ENCODE measurements at regions of chr7 and their contacts with region 1.

Region 1: DNA sequence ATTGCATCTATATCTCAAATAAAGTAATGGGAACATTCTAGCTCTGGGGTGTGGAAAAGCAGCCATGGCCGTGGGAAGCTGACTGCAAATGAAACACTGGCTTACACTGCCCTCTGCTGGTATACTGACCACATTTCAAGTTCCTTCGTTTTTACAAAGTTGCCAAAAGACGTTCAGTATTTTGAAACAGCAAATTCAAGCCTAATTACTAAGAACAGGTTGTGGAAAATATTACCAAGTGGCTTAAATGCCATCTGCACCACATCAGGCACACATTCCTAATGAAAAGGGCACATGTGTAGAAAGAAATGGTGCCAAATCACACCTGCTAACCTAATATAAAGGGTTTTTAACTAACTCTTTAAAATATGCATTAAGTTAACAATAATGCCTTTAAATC is 83.9 kb downstream of the JAZF1 start:
- DNase-seq: peak; percentile 71
- H3K4me3 ChIP-seq: no peak overlapping the region
- H3K27ac ChIP-seq: no peak overlapping the region
- H3K4me1 ChIP-seq: no peaks in the 10 kb centered on the region
- H3K27me3 ChIP-seq: no peaks in the 10 kb centered on the region
- CTCF ChIP-seq: peak; percentile 71 to 77
- POLR2A ChIP-seq: no peak

Region 2: GRCh38 chr7:27179503-27180430 is 916.9 kb before region 1 on chr7:
- CTCF ChIA-PET with region 1: interaction called, 13 read pairs
- POLR2A ChIA-PET with region 1: no interaction called
- dilution Hi-C with region 1: no loop called
- intact Hi-C with region 1: no loop called
- DNase-seq: peak; percentile 90
- H3K4me3 ChIP-seq: peak overlapping the region; percentile 53 to 94 (median 69)
- H3K27ac ChIP-seq: peak overlapping the region; percentile 96
- H3K4me1 ChIP-seq: peaks cover 65% of the 10 kb centered on the region
- H3K27me3 ChIP-seq: no peaks in the 10 kb centered on the region
- CTCF ChIP-seq: peak; percentile 93 to 97
- POLR2A ChIP-seq: no peak

Region 3: DNA sequence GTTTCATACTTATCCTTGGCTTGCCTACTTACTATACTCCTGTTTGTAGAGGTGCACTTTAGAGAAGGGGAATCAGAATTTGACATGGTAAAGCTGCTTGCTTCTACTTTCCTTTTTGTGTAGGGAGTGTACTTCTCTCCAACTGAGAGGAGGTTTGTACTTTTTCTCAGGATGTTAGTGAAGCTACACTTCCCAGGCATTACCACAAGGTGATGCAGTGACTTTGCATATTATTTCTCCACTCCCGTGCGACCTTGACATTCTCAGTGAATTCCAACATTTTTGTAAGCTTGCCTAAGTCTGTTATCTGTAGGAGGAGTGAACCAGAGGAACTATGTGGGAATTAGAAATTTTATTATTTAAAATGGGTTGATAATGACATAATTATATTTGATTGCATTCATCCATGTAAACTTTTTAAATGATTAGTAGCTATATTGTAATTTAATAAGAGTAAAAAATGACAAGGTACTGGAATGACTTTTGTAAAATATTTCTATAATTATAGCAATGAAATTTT is 351.6 kb before region 1 on chr7:
- CTCF ChIA-PET with region 1: interaction called, 11 read pairs
- POLR2A ChIA-PET with region 1: no interaction called
- dilution Hi-C with region 1: no loop called
- intact Hi-C with region 1: no loop called
- DNase-seq: peak; percentile 85
- H3K4me3 ChIP-seq: no peak overlapping the region
- H3K27ac ChIP-seq: peak overlapping the region; percentile 49
- H3K4me1 ChIP-seq: peaks cover 11% of the 10 kb centered on the region
- H3K27me3 ChIP-seq: no peaks in the 10 kb centered on the region
- CTCF ChIP-seq: peak; percentile 54 to 65
- POLR2A ChIP-seq: no peak

Region 4: DNA sequence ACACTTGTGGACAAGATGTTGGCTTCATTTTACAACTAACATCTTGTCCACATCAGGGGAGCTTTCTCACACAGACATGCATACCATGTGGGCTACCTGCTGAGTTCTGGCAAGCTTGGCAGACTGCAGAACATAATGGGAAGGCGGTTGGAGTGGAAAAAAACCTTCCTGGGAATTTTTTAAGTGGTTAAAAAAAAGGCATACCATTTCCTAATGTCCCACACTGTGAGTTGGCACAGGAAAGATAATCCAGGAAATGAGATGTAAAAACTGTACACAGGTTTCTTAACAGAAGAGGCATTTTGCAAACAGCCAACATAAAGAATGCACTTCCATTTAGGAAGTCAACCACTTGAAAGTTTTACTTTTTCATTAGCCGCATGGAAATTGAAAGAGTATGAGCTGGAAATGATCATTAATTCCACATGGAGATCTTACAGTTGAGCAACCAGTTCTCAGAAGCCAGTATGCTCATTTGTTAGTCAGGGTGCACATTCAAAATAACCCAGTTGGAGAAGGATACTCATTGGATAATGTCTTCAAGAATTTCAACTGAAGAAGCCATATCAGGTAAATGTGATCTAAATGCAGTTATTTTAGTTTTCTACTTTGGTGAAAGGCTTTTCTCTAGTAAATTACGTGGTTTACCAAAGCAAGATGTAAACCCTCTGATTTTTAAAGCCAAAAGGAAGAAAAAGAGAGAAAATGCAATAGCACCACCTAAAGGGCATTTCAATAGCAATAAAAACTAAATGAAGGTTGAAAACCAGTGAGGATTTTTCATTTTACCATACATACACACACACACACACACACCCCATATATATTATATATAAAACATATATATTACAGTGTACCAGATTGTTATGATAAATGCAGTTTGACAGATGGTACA is 162.8 kb before region 1 on chr7:
- CTCF ChIA-PET with region 1: interaction called, 10 read pairs
- POLR2A ChIA-PET with region 1: interaction called, 3 read pairs
- dilution Hi-C with region 1: no loop called
- intact Hi-C with region 1: loop called (anchors 5 kb)
- DNase-seq: peak; percentile 19
- H3K4me3 ChIP-seq: no peak overlapping the region
- H3K27ac ChIP-seq: no peak overlapping the region
- H3K4me1 ChIP-seq: no peaks in the 10 kb centered on the region
- H3K27me3 ChIP-seq: no peaks in the 10 kb centered on the region
- CTCF ChIP-seq: peak; percentile 13 to 22
- POLR2A ChIP-seq: no peak

Region 5: GRCh38 chr7:28062197-28062991 is 34.3 kb before region 1 on chr7:
- CTCF ChIA-PET with region 1: interaction called, 55 read pairs
- POLR2A ChIA-PET with region 1: no interaction called
- dilution Hi-C with region 1: no loop called
- intact Hi-C with region 1: loop called (anchors 1 kb)
- DNase-seq: peak; percentile 59
- H3K4me3 ChIP-seq: no peak overlapping the region
- H3K27ac ChIP-seq: no peak overlapping the region
- H3K4me1 ChIP-seq: peaks cover 6% of the 10 kb centered on the region
- H3K27me3 ChIP-seq: no peaks in the 10 kb centered on the region
- CTCF ChIP-seq: peak; percentile 67 to 77
- POLR2A ChIP-seq: no peak

Region 6: GRCh38 chr7:28083164-28083997 is 13.3 kb before region 1 on chr7:
- CTCF ChIA-PET with region 1: interaction called, 48 read pairs
- POLR2A ChIA-PET with region 1: no interaction called
- dilution Hi-C with region 1: no loop called
- intact Hi-C with region 1: no loop called
- DNase-seq: no peak
- H3K4me3 ChIP-seq: no peak overlapping the region
- H3K27ac ChIP-seq: no peak overlapping the region
- H3K4me1 ChIP-seq: peaks cover 6% of the 10 kb centered on the region
- H3K27me3 ChIP-seq: no peaks in the 10 kb centered on the region
- CTCF ChIP-seq: no peak
- POLR2A ChIP-seq: no peak

Region 7: DNA sequence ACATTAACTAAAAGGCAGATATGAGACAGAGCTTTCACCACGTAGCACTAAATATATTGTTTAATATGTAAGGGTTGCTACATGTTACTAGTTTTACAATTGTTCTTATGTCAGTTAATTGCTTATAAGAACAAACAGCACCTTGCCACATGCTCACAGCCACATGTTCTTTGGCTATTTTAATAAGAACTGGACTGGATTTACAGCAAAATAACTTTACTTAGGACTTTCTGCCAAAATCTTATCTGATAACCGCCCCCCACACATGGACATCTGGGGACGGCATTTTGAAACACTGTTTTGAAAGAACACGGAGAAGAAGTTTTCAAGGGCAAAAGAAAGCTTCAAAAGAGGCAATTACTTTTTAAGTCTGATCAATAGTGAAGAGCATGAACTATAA is 38.6 kb after region 1 on chr7:
- CTCF ChIA-PET with region 1: no interaction called
- POLR2A ChIA-PET with region 1: no interaction called
- dilution Hi-C with region 1: no loop called
- intact Hi-C with region 1: no loop called
- DNase-seq: no peak
- H3K4me3 ChIP-seq: no peak overlapping the region
- H3K27ac ChIP-seq: no peak overlapping the region
- H3K4me1 ChIP-seq: no peaks in the 10 kb centered on the region
- H3K27me3 ChIP-seq: no peaks in the 10 kb centered on the region
- CTCF ChIP-seq: no peak
- POLR2A ChIP-seq: no peak

Region 8: DNA sequence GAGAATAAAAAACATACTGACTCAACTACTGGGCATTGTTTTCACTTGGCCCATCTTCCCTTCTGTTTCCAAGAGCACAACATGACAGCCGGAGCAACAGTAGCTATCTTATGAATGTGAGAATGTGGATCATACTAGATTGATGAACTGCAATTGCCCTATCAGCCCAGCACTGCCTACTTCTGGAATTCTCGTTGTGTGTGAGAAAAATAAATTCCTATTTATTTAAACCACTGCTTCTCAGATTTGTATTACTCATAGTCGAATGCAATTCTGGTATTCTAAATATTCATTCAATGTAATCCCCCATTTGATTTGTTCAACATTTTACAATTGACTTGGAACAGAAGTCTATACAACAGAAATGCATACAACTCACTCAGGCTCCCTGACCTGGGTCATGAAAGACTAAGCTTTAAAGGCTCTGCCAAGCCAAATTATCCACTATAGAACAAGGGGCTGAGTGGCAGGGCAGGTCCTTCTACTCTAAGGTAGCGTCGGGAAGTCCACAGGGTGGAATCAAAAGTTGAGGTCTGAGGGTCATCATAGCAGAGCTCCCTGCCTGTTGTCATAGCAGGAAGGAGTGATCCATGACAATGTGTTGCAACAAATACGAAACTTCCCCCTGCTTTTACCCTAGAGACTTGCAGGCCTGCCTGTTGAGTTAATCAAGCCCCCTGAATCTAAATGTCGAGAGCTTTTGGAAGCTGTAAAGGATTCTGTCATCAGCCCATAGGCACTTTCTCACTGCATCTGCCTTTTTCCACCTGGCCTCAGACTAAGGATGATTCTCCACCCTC is 96.3 kb after region 1 on chr7:
- CTCF ChIA-PET with region 1: no interaction called
- POLR2A ChIA-PET with region 1: no interaction called
- dilution Hi-C with region 1: no loop called
- intact Hi-C with region 1: no loop called
- DNase-seq: no peak
- H3K4me3 ChIP-seq: no peak overlapping the region
- H3K27ac ChIP-seq: no peak overlapping the region
- H3K4me1 ChIP-seq: no peaks in the 10 kb centered on the region
- H3K27me3 ChIP-seq: peaks cover 3 to 6% of the 10 kb centered on the region in 2 experiments
- CTCF ChIP-seq: no peak
- POLR2A ChIP-seq: no peak

Measured in endothelial cell of umbilical vein (primary cell).